HEK293T (cell line): ENCODE measurements at regions of chr5 and their contacts with region 1.

Region 1: GRCh38 chr5:140244525-140245025 is 58.3 kb downstream of the PFDN1 start:
- DNase-seq: peak; percentile 84

Region 2: DNA sequence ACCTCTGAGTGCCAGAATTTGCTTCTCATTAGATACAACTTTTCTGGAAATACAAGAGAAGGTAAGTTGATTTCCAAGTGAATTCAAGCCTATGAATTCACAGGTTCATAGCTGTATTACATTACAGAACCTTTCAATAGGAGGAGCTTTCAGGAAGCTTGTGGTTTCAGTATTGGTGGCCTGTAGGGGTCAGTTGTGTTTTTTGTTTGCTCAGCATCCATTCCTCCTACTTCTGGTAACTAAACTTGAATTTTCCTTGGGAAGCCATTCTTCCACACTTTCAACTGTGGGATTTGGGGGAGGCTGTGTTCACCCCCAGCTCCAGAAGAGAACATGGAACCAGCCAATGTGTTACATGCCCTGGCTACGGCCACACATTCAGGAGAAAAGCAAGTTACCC is 75.2 kb before region 1 on chr5:
- CTCF ChIA-PET with region 1: interaction called, 10 read pairs
- POLR2A ChIA-PET with region 1: no interaction called
- DNase-seq: no peak

Region 3: GRCh38 chr5:140261403-140262171 is 17.0 kb after region 1 on chr5:
- CTCF ChIA-PET with region 1: interaction called, 26 read pairs
- POLR2A ChIA-PET with region 1: no interaction called
- DNase-seq: peak; percentile 75

Region 4: GRCh38 chr5:140351609-140352334 is 107.2 kb after region 1 on chr5:
- CTCF ChIA-PET with region 1: interaction called, 174 read pairs
- POLR2A ChIA-PET with region 1: interaction called, 117 read pairs
- DNase-seq: peak; percentile 61

Region 5: DNA sequence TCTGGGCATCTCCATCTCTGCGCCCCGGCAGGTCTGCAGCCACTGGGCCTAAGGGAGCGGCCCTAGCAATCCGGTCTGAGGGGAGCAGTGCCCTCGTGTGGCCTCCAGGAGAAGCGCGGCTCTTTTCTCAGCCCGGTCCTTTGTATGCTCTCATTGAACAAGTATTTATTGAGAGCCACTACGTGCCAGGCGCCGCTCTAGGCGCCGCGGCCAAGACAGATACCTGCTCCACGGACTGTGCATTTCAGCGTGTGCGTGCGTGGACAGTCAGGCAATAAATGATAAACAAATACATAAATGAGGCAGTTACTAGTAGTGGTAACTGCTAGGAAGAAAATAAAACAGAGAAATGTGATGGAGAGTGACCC is 113.1 kb after region 1 on chr5:
- CTCF ChIA-PET with region 1: interaction called, 169 read pairs
- POLR2A ChIA-PET with region 1: interaction called, 3 read pairs
- DNase-seq: peak; percentile 86

Region 6: GRCh38 chr5:140372971-140373487 is 128.5 kb after region 1 on chr5:
- CTCF ChIA-PET with region 1: interaction called, 13 read pairs
- POLR2A ChIA-PET with region 1: no interaction called
- DNase-seq: peak; percentile 77